ENCODE measurements at regions of chr11 and their contacts with region 1.

Region 1: DNA sequence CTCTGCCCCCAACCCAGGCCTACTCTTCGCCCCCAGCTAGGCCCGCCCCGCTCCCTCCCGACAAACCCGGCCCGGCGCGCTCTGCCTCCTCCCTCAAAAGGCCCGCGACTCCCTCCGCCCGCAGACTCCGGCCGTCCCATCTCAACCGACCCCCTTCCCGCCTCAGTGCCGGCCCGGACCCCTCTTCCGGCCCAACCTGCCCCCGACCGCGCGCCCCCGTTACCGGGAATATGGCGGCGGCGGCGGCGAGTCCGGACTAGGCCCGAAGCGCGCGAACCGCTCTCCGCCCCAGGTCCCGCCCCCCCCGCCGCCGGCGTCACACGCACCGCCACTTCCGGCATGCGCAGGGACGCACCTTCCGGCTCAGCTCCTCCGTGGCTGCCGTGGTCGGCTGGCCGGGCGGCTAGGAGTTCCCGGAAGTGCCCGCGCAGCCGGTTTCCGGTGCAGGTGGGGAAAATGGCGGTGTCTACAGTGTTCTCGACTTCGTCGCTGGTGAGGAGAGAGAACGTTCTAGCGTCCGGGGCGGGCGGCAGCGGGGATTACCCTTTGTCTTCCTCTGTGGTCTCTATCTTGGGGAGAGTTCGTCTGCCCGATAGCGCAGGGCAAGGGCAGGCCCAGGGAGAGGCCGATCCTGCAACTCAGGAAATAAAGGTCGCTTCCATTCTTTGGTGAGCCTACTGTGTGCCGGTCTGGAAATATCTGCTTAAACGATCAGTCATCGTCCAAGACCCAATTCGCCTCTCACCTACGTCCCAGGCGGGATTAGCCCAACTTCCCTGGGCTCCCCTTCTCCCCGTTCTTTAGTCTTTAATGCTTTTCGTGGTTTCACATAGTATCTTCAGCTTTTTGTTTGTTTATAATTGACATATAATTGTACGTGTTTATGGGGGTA is at the starts of genes CPSF7 and SDHAF2:
- DNase-seq: peak; percentile 96 to 99 (median 97)
- ATAC-seq: peak; percentile 93
- H3K4me3 ChIP-seq: peak within 1 kb of the TSS; percentile 91
- H3K4me3 Mint-ChIP-seq: peak within 1 kb of the TSS; percentile 89 to 100 (median 97)
- H3K27ac ChIP-seq: peak within 1 kb of the TSS; percentile 98
- H3K27ac Mint-ChIP-seq: peak within 1 kb of the TSS; percentile 97 to 100 (median 99)
- H3K4me1 ChIP-seq: peaks cover 20 to 33% of the 10 kb centered on the region in 2 donors
- H3K4me1 Mint-ChIP-seq: peaks cover 31 to 86% (median 69%) of the 10 kb centered on the region in 7 donors
- H3K27me3 ChIP-seq: no peaks in the 10 kb centered on the region
- H3K27me3 Mint-ChIP-seq: peaks cover 0 to 2% (median 0%) of the 10 kb centered on the region in 5 donors
- total RNA-seq, gene CPSF7: 96.0 to 174 (median 113) TPM
- total RNA-seq, gene SDHAF2: 36.1 to 56.6 (median 48.2) TPM

Region 2: GRCh38 chr11:60913793-60914632 is 515.9 kb before region 1 on chr11 and contains the start of gene TMEM109:
- CTCF ChIA-PET with region 1: no interaction called
- POLR2A ChIA-PET with region 1: interaction called, 5 read pairs
- intact Hi-C with region 1: loop called (anchors 1 to 10 kb)
- DNase-seq: peak; percentile 77 to 93 (median 91)
- ATAC-seq: peak; percentile 76
- H3K4me3 ChIP-seq: peak within 1 kb of the TSS; percentile 94
- H3K4me3 Mint-ChIP-seq: peak within 1 kb of the TSS; percentile 91 to 99 (median 98)
- H3K27ac ChIP-seq: peak within 1 kb of the TSS; percentile 94
- H3K27ac Mint-ChIP-seq: peak within 1 kb of the TSS; percentile 91 to 99 (median 97)
- H3K4me1 ChIP-seq: peaks cover 43 to 45% of the 10 kb centered on the region in 2 donors
- H3K4me1 Mint-ChIP-seq: peaks cover 39 to 77% (median 60%) of the 10 kb centered on the region in 7 donors
- H3K27me3 ChIP-seq: no peaks in the 10 kb centered on the region
- H3K27me3 Mint-ChIP-seq: peaks cover 0 to 11% (median 0%) of the 10 kb centered on the region in 5 donors
- total RNA-seq, gene TMEM109: 49.8 to 99.8 (median 56.9) TPM

Region 3: DNA sequence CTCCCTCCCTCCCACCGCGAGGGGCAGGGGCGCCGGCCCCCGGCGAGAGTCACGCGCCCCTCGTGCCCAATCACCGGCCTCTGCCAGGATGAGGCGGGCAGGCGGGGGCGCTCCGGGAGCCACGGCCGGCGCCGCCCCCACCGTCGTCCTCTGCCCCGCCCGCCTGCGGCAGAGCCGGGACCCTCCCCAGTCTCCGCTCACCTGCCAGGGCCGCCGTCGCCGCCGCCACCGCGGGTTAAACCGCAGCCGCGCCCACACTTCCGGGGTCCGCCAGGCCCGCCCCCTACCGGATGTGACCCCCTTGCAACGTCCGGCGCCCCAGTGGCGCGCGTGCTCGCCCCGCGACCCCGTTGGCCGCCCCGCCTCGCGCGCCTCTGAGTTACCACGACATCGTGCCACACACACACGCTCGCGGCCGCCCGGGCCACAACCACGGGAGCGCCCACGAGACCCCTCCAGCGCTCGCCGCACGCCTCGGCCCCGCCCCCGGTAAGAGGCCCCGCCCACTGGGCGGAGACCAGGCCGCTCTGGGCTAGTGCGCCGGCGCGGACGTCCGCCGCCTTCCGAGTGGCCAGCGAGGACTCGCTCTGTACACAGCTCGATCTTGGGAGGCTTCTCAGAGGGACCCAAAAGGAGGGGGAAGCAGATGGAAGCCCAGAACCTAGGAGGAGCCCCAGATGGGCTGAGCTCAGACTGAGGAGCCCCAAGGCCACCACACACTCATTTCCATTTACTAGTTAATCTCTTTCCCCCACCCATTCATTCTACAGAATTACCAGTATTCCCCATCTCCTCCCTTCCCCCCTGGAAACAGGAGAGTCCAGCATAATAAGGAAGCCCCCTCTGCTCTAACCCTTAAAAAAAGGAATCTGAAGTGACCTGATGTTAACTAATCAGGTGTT is 268.5 kb before region 1 on chr11 and contains the start of gene VPS37C:
- CTCF ChIA-PET with region 1: no interaction called
- POLR2A ChIA-PET with region 1: no interaction called
- intact Hi-C with region 1: loop called (anchors 5 kb)
- DNase-seq: peak; percentile 80 to 99 (median 87)
- ATAC-seq: peak; percentile 83
- H3K4me3 ChIP-seq: peak within 1 kb of the TSS; percentile 74
- H3K4me3 Mint-ChIP-seq: peak within 1 kb of the TSS; percentile 85 to 96 (median 90)
- H3K27ac ChIP-seq: peak within 1 kb of the TSS; percentile 78
- H3K27ac Mint-ChIP-seq: peak within 1 kb of the TSS; percentile 84 to 96 (median 94)
- H3K4me1 ChIP-seq: peaks cover 7 to 14% of the 10 kb centered on the region in 2 donors
- H3K4me1 Mint-ChIP-seq: peaks cover 31 to 62% (median 48%) of the 10 kb centered on the region in 7 donors
- H3K27me3 ChIP-seq: no peaks in the 10 kb centered on the region
- H3K27me3 Mint-ChIP-seq: no peaks in the 10 kb centered on the region
- total RNA-seq, gene VPS37C: 4.1 to 12.0 (median 7.9) TPM

Region 4: GRCh38 chr11:61332797-61333549 is 97.0 kb before region 1 on chr11 and contains the starts of genes DDB1 and TKFC:
- CTCF ChIA-PET with region 1: interaction called, 21 read pairs
- POLR2A ChIA-PET with region 1: interaction called, 15 read pairs
- intact Hi-C with region 1: loop called (anchors 1 kb)
- DNase-seq: peak; percentile 91 to 99 (median 97)
- ATAC-seq: peak; percentile 96
- H3K4me3 ChIP-seq: peak within 1 kb of the TSS; percentile 84
- H3K4me3 Mint-ChIP-seq: peak within 1 kb of the TSS; percentile 83 to 100 (median 95)
- H3K27ac ChIP-seq: peak within 1 kb of the TSS; percentile 99
- H3K27ac Mint-ChIP-seq: peak within 1 kb of the TSS; percentile 91 to 100 (median 98)
- H3K4me1 ChIP-seq: peaks cover 27 to 30% of the 10 kb centered on the region in 2 donors
- H3K4me1 Mint-ChIP-seq: peaks cover 33 to 67% (median 64%) of the 10 kb centered on the region in 7 donors
- H3K27me3 ChIP-seq: no peaks in the 10 kb centered on the region
- H3K27me3 Mint-ChIP-seq: no peaks in the 10 kb centered on the region
- total RNA-seq, gene DDB1: 153 to 213 (median 160) TPM
- total RNA-seq, gene TKFC: 36.9 to 59.9 (median 43.3) TPM

Region 5: DNA sequence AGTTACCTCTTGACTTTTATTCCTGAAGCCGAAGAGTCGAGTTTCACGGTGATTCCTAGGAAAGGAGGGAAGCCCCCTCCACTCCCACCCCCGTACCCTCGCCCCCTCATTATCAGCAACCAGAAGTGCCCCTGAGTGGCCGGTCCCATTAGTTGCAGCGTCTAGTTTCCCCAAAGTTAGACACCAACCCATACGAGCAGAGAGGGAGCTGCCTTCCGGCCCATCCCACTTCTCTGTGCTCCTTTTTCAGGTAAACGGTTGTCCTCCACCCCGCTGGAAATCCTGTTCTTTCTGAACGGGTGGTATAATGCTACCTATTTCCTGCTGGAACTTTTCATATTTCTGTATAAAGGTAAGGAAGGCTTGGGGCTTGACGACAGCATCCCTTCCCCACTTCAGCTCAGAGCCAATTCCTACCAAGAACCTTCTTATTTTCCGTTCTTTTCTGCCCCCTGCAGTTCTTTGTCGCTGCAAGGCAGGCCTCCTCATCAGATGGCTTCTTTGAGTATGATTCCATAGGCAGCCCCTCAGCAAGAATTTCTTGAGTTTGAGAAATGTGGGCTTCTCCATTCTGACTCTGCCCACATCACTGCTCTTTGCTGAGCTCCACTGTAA is 36.8 kb before region 1 on chr11:
- CTCF ChIA-PET with region 1: interaction called, 11 read pairs
- POLR2A ChIA-PET with region 1: interaction called, 27 read pairs
- intact Hi-C with region 1: loop called (anchors 1 to 2 kb)
- DNase-seq: peak in 7 of 9 donors; percentile 23 to 45 (median 37)
- ATAC-seq: peak; percentile 59
- H3K4me3 ChIP-seq: peak overlapping the region; percentile 84
- H3K4me3 Mint-ChIP-seq: peak overlapping the region; percentile 90 to 99 (median 94)
- H3K27ac ChIP-seq: peak overlapping the region; percentile 87
- H3K27ac Mint-ChIP-seq: peak overlapping the region; percentile 93 to 98 (median 97)
- H3K4me1 ChIP-seq: peaks cover 9 to 10% of the 10 kb centered on the region in 2 donors
- H3K4me1 Mint-ChIP-seq: peaks cover 9 to 25% (median 21%) of the 10 kb centered on the region in 7 donors
- H3K27me3 ChIP-seq: no peaks in the 10 kb centered on the region
- H3K27me3 Mint-ChIP-seq: no peaks in the 10 kb centered on the region

Region 6: GRCh38 chr11:61446211-61446651 is 16.3 kb after region 1 on chr11:
- CTCF ChIA-PET with region 1: interaction called, 30 read pairs
- POLR2A ChIA-PET with region 1: interaction called, 7 read pairs
- intact Hi-C with region 1: loop called in 1 of 2 experiments (anchors 1 kb)
- DNase-seq: peak; percentile 24 to 71 (median 53)
- ATAC-seq: peak; percentile 92
- H3K4me3 ChIP-seq: no peak overlapping the region
- H3K4me3 Mint-ChIP-seq: no peak overlapping the region
- H3K27ac ChIP-seq: no peak overlapping the region
- H3K27ac Mint-ChIP-seq: peak overlapping the region in 4 of 9 donors; percentile 21 to 38 (median 30)
- H3K4me1 ChIP-seq: no peaks in the 10 kb centered on the region
- H3K4me1 Mint-ChIP-seq: peaks cover 7 to 27% (median 17%) of the 10 kb centered on the region in 7 donors
- H3K27me3 ChIP-seq: no peaks in the 10 kb centered on the region
- H3K27me3 Mint-ChIP-seq: no peaks in the 10 kb centered on the region

Region 7: GRCh38 chr11:61468002-61468401 is 38.1 kb after region 1 on chr11:
- CTCF ChIA-PET with region 1: no interaction called
- POLR2A ChIA-PET with region 1: no interaction called
- intact Hi-C with region 1: no loop called
- DNase-seq: no peak
- ATAC-seq: no peak
- H3K4me3 ChIP-seq: no peak overlapping the region
- H3K4me3 Mint-ChIP-seq: no peak overlapping the region
- H3K27ac ChIP-seq: no peak overlapping the region
- H3K27ac Mint-ChIP-seq: no peak overlapping the region
- H3K4me1 ChIP-seq: no peaks in the 10 kb centered on the region
- H3K4me1 Mint-ChIP-seq: peaks cover 0 to 2% (median 0%) of the 10 kb centered on the region in 7 donors
- H3K27me3 ChIP-seq: no peaks in the 10 kb centered on the region
- H3K27me3 Mint-ChIP-seq: no peaks in the 10 kb centered on the region

Region 8: GRCh38 chr11:61482513-61482912 is 52.6 kb after region 1 on chr11:
- CTCF ChIA-PET with region 1: no interaction called
- POLR2A ChIA-PET with region 1: no interaction called
- intact Hi-C with region 1: no loop called
- DNase-seq: no peak
- ATAC-seq: peak; percentile 36
- H3K4me3 ChIP-seq: no peak overlapping the region
- H3K4me3 Mint-ChIP-seq: no peak overlapping the region
- H3K27ac ChIP-seq: no peak overlapping the region
- H3K27ac Mint-ChIP-seq: no peak overlapping the region
- H3K4me1 ChIP-seq: peaks cover 5 to 6% of the 10 kb centered on the region in 2 donors
- H3K4me1 Mint-ChIP-seq: peaks cover 3 to 17% (median 8%) of the 10 kb centered on the region in 7 donors
- H3K27me3 ChIP-seq: no peaks in the 10 kb centered on the region
- H3K27me3 Mint-ChIP-seq: peaks cover 0 to 12% (median 0%) of the 10 kb centered on the region in 5 donors

Region 9: GRCh38 chr11:62123669-62124185 is 693.8 kb after region 1 on chr11 and contains the start of gene INCENP:
- CTCF ChIA-PET with region 1: no interaction called
- POLR2A ChIA-PET with region 1: no interaction called
- intact Hi-C with region 1: loop called (anchors 5 to 10 kb)
- DNase-seq: peak; percentile 75 to 97 (median 95)
- ATAC-seq: peak; percentile 100
- H3K4me3 ChIP-seq: peak within 1 kb of the TSS; percentile 87
- H3K4me3 Mint-ChIP-seq: peak within 1 kb of the TSS; percentile 89 to 95 (median 94)
- H3K27ac ChIP-seq: peak within 1 kb of the TSS; percentile 81
- H3K27ac Mint-ChIP-seq: peak within 1 kb of the TSS; percentile 53 to 95 (median 91)
- H3K4me1 ChIP-seq: peaks cover 6 to 9% of the 10 kb centered on the region in 2 donors
- H3K4me1 Mint-ChIP-seq: peaks cover 22 to 40% (median 28%) of the 10 kb centered on the region in 7 donors
- H3K27me3 ChIP-seq: no peaks in the 10 kb centered on the region
- H3K27me3 Mint-ChIP-seq: peaks cover 0 to 15% (median 0%) of the 10 kb centered on the region in 5 donors
- total RNA-seq, gene INCENP: 18.6 to 124 (median 25.6) TPM

Measured in naive thymus-derived CD4-positive, alpha-beta T cell (primary cell).